ENCODE measurements at regions of chr11 and their contacts with region 1.

Region 1: DNA sequence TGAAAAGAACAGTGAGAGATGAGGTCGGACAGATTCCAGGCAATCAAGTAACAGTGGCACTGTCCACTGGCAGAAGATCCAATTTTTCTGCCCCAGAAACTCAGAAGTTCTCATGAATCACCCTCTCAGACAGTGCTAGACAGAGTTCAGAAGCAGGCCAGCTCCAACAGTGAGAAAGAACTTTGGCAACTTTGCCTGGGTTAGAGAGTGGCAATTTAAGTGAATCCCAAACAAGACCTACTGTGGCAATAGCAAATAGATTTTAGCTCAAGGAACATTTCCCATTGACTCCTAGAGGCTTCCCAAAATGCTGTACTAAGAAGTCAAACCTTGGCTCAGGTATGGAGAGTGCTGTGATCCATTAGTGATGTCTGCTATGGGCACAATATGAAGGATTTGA is 12.3 kb downstream of the CD44 start:
- DNase-seq: no peak
- H3K4me3 ChIP-seq: no peak overlapping the region
- H3K27ac ChIP-seq: peak overlapping the region in 3 of 4 donors; percentile 17 to 31 (median 29)
- H3K4me1 ChIP-seq: peaks cover 0 to 70% (median 30%) of the 10 kb centered on the region in 4 donors
- H3K27me3 ChIP-seq: no peaks in the 10 kb centered on the region
- CTCF ChIP-seq: no peak
- EP300 ChIP-seq: no peak
- POLR2A ChIP-seq: no peak

Region 2: GRCh38 chr11:35165423-35166368 is 14.5 kb after region 1 on chr11:
- intact Hi-C with region 1: loop called (anchors 2 kb)
- DNase-seq: no peak
- H3K4me3 ChIP-seq: no peak overlapping the region
- H3K27ac ChIP-seq: peak overlapping the region; percentile 50 to 82 (median 72)
- H3K4me1 ChIP-seq: peaks cover 0 to 96% (median 84%) of the 10 kb centered on the region in 4 donors
- H3K27me3 ChIP-seq: no peaks in the 10 kb centered on the region
- CTCF ChIP-seq: no peak
- EP300 ChIP-seq: no peak
- POLR2A ChIP-seq: no peak